ENCODE measurements at regions of chr7 and their contacts with region 1.

Region 1: DNA sequence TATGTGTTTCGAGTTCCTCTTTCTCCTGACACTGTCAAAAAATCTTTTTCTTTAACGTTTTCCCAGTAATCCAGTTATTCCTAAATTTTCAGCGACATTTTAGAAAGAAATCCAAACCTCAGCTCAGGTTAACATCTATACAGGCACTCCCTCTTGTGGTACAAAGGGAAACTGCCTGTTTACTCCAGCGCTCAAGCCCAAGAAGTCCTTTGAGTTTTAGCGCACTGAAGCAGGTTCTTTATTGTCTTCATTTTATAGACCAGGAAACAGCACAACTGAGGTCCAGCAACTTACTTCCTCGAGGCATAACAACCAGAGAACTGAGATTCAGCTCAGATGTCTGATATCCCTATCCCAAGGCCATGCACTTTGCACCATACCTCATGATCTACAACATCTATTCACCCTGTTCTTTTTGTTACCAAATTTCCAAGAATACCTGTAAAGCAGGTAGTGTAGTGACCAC is 287.2 kb upstream of the MKLN1 start:
- DNase-seq: peak; percentile 64
- CTCF ChIP-seq: peak; percentile 79

Region 2: GRCh38 chr7:130875265-130875741 is 165.2 kb before region 1 on chr7:
- CTCF ChIA-PET with region 1: interaction called, 12 read pairs
- POLR2A ChIA-PET with region 1: no interaction called
- DNase-seq: peak; percentile 67
- CTCF ChIP-seq: peak; percentile 77

Region 3: DNA sequence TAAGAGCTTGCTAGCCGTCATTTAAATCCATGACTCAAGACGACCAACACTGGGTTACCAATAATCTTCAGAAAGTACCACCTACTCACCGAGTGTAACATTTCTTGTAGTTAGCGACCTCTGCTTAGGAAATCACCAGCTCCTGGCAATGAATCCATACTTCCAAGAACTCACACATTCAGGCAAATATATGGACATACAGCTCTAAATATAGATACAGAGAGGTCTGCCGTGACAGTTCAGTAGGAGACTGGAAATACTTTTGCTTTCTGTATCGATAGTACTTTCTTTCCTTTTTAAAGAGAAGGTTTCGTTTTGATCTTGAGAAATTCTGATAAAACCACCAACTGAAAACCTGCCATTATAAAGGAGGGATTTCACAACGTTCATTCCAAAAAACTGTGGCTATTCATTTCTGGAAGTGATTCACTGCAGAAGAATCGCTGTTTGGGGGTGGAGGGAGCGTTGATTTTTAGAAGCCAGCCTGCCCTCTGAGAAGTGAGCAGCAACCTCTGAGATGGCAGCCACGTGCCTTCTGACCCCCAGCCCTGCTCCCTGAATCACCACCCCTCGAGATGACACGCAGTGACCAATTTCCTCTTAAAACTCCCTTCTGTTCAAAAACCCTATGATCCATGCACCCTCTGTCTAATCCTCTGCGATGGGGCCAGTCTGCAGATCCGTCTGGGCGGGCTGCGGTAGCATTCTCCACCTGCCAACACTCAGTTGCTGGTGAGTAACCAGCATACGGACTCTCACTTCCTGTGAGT is 127.5 kb before region 1 on chr7:
- CTCF ChIA-PET with region 1: interaction called, 10 read pairs
- POLR2A ChIA-PET with region 1: interaction called, 3 read pairs
- DNase-seq: peak; percentile 71
- CTCF ChIP-seq: no peak

Region 4: DNA sequence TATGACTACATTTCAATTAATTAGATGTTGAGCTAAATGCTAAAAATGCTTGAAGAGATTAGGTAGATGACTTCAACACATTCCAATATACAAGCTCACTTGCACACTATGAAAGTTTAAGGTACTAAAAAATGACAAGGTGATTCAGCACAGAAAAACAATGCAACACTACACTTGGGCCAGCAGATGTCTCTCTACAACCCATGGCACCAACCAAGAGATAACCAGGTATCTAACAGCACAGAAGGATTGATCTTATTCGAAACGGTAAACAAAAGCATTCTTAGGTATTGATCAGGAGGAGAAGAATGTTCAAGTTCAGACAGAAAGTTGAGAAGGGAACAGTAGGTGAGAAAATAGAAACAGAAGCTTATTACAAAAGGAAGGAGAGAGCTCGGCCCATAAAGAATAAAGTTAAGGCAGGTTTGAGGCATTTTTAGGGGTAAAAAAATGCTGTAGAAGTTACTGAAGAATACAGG is 58.3 kb before region 1 on chr7:
- CTCF ChIA-PET with region 1: interaction called, 29 read pairs
- POLR2A ChIA-PET with region 1: no interaction called
- DNase-seq: peak; percentile 50
- CTCF ChIP-seq: peak; percentile 59

Region 5: GRCh38 chr7:131021460-131021859 is 19.0 kb before region 1 on chr7:
- CTCF ChIA-PET with region 1: interaction called, 38 read pairs
- POLR2A ChIA-PET with region 1: no interaction called
- DNase-seq: peak; percentile 30
- CTCF ChIP-seq: no peak

Region 6: GRCh38 chr7:131057015-131057793 is 16.7 kb after region 1 on chr7:
- CTCF ChIA-PET with region 1: interaction called, 34 read pairs
- POLR2A ChIA-PET with region 1: interaction called, 7 read pairs
- DNase-seq: peak; percentile 31
- CTCF ChIP-seq: no peak

Measured in GM10248 (cell line).